GM10248 (cell line): ENCODE measurements at regions of chr4 and their contacts with region 1.

Region 1: GRCh38 chr4:151540728-151541422 is 131.9 kb downstream of the FHIP1A start:
- DNase-seq: no peak
- CTCF ChIP-seq: no peak

Region 2: DNA sequence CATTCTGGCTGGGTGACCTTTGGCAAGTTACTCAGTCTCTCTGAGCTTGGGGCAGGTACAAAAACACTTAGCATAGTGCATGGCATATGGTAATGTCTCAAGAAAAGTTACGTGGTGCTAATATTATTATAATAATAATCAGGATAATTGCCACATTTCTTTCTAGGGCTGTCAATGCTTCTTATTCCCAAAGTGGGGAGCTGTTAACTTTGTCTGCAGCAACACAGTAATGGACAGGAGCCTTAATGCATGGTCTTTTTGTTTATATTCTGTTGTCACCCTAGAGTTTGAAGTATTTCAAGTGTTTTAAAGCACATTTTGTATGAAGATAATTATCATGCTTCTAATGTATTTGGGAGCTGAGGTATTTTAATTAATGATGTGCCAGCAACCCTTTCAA is 10.1 kb before region 1 on chr4:
- CTCF ChIA-PET with region 1: interaction called, 12 read pairs
- POLR2A ChIA-PET with region 1: no interaction called
- DNase-seq: no peak
- CTCF ChIP-seq: no peak